Activated CD4-positive, alpha-beta memory T cell treated with anti-CD3 and anti-CD28 coated beads for 36 hours (primary cell): ENCODE measurements at regions of chr14 and their contacts with region 1.

Region 1: DNA sequence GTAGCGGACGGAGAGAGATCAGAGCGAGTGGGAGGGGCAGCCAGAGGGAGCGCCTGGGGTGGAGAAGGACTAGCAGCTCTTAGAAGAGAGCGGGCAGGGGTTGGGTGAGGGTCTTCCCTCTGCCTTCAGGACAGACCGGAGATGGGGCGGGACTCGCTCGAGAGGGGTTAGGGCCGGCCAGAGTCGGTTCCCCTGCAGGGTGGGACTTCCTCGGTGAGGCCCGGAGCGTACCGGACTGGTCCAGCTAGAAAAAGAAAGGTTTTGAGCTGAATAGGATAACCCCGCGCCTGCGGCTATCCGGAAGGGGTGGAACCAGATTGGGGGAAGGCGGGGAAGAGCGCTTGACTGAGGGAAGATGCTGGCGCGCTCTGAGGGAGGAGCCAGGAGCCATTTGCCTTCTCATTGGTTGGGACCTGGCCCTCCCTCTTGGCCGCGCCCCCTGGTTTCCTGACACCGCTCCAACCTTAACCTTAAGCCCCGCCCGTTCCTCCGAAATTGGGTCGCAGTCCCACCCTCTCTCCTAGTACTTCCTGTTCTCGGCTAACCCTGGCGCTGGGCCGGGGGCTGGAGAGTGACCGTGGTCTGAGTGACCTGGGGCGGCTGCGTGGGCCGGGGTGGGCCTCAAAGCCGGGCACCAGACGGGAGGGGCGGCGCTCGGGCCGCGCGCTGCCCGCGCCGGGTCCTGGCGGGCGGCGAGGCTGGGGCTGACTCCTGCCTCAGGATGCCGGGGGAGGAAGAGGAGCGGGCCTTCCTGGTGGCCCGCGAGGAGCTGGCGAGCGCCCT is at the start of gene RNF31:
- DNase-seq: peak; percentile 99
- H3K4me3 Mint-ChIP-seq: peak within 1 kb of the TSS; percentile 100
- H3K27ac Mint-ChIP-seq: peak within 1 kb of the TSS; percentile 99
- H3K4me1 Mint-ChIP-seq: peaks cover 56% of the 10 kb centered on the region
- H3K27me3 Mint-ChIP-seq: no peaks in the 10 kb centered on the region
- total RNA-seq, gene RNF31: 75.5 to 80.4 TPM

Region 2: GRCh38 chr14:23665375-23666192 is 481.6 kb before region 1 on chr14:
- CTCF ChIA-PET with region 1: no interaction called
- POLR2A ChIA-PET with region 1: no interaction called
- intact Hi-C with region 1: no loop called
- DNase-seq: peak; percentile 23
- H3K4me3 Mint-ChIP-seq: no peak overlapping the region
- H3K27ac Mint-ChIP-seq: no peak overlapping the region
- H3K4me1 Mint-ChIP-seq: no peaks in the 10 kb centered on the region
- H3K27me3 Mint-ChIP-seq: no peaks in the 10 kb centered on the region

Region 3: DNA sequence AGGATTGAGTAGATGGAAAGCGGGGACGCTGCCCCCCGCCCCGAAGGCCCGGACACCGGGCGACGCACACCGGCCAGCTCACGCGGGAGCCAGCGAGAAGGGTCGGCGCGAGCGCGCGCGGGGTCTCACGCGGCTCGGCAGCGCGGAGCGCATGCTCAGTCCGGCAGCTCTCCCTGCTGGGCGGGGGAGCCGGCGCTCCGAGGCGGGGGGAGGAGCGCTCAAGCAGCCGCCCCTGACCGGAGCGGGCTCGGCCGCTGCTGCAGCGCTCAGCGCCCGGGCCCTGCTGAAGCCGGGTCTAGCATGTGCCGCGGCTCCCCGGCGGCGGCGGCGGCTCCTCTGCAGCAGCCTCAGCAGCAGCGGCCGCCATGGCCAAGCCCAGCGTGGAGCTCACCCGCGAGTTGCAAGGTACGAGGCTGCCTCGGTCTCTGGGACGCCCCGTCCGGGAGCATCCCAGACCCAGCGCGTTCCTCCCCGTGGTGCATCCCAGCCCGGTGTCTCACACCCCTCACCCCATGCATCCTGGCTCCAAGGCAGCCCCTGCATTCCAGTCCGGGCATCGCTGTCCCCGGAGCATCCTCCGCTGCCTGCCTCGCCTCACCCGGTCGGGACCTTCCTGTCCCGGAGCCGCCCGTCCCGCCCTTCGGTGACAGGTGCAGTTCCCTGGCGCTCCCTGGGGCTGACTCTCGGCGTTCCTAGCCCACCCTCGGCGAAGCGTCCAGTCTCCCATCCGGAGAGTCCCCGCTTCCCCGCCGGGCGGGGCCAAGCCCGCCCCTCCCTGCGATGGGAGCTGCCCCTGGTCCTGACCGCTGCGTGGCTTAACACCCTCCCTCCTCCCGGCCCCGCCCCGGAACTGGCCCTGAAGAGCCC is 95.1 kb before region 1 on chr14 and contains the start of gene CARMIL3:
- CTCF ChIA-PET with region 1: no interaction called
- POLR2A ChIA-PET with region 1: interaction called, 3 read pairs
- intact Hi-C with region 1: loop called (anchors 2 kb)
- DNase-seq: peak; percentile 74
- H3K4me3 Mint-ChIP-seq: peak within 1 kb of the TSS; percentile 70
- H3K27ac Mint-ChIP-seq: no peak within 1 kb of the TSS
- H3K4me1 Mint-ChIP-seq: peaks cover 20% of the 10 kb centered on the region
- H3K27me3 Mint-ChIP-seq: peaks cover 4% of the 10 kb centered on the region
- total RNA-seq, gene CARMIL3: 0.75 to 1.00 TPM

Region 4: GRCh38 chr14:24108336-24108874 is 38.8 kb before region 1 on chr14:
- CTCF ChIA-PET with region 1: interaction called, 16 read pairs
- POLR2A ChIA-PET with region 1: interaction called, 38 read pairs
- intact Hi-C with region 1: no loop called
- DNase-seq: no peak
- H3K4me3 Mint-ChIP-seq: peak overlapping the region; percentile 11
- H3K27ac Mint-ChIP-seq: peak overlapping the region; percentile 91
- H3K4me1 Mint-ChIP-seq: peaks cover 22% of the 10 kb centered on the region
- H3K27me3 Mint-ChIP-seq: no peaks in the 10 kb centered on the region

Region 5: GRCh38 chr14:24177891-24178290 is 30.7 kb after region 1 on chr14:
- CTCF ChIA-PET with region 1: no interaction called
- POLR2A ChIA-PET with region 1: no interaction called
- intact Hi-C with region 1: no loop called
- DNase-seq: no peak
- H3K4me3 Mint-ChIP-seq: no peak overlapping the region
- H3K27ac Mint-ChIP-seq: no peak overlapping the region
- H3K4me1 Mint-ChIP-seq: peaks cover 3% of the 10 kb centered on the region
- H3K27me3 Mint-ChIP-seq: no peaks in the 10 kb centered on the region

Region 6: GRCh38 chr14:24188251-24189058 is 41.3 kb after region 1 on chr14 and contains the start of gene IPO4:
- CTCF ChIA-PET with region 1: interaction called, 3 read pairs
- POLR2A ChIA-PET with region 1: interaction called, 7 read pairs
- intact Hi-C with region 1: loop called (anchors 1 kb)
- DNase-seq: peak; percentile 97
- H3K4me3 Mint-ChIP-seq: peak within 1 kb of the TSS; percentile 89
- H3K27ac Mint-ChIP-seq: peak within 1 kb of the TSS; percentile 74
- H3K4me1 Mint-ChIP-seq: peaks cover 40% of the 10 kb centered on the region
- H3K27me3 Mint-ChIP-seq: no peaks in the 10 kb centered on the region
- total RNA-seq, gene IPO4: 69.5 to 72.6 TPM

Region 7: GRCh38 chr14:24232121-24232644 is 85.0 kb after region 1 on chr14 and contains the start of gene NEDD8:
- CTCF ChIA-PET with region 1: no interaction called
- POLR2A ChIA-PET with region 1: no interaction called
- intact Hi-C with region 1: loop called (anchors 2 kb)
- DNase-seq: peak; percentile 96
- H3K4me3 Mint-ChIP-seq: peak within 1 kb of the TSS; percentile 93
- H3K27ac Mint-ChIP-seq: peak within 1 kb of the TSS; percentile 90
- H3K4me1 Mint-ChIP-seq: peaks cover 55% of the 10 kb centered on the region
- H3K27me3 Mint-ChIP-seq: no peaks in the 10 kb centered on the region
- total RNA-seq, gene NEDD8: 202 to 213 TPM